ENCODE measurements at regions of chr22 and their contacts with region 1.

Region 1: DNA sequence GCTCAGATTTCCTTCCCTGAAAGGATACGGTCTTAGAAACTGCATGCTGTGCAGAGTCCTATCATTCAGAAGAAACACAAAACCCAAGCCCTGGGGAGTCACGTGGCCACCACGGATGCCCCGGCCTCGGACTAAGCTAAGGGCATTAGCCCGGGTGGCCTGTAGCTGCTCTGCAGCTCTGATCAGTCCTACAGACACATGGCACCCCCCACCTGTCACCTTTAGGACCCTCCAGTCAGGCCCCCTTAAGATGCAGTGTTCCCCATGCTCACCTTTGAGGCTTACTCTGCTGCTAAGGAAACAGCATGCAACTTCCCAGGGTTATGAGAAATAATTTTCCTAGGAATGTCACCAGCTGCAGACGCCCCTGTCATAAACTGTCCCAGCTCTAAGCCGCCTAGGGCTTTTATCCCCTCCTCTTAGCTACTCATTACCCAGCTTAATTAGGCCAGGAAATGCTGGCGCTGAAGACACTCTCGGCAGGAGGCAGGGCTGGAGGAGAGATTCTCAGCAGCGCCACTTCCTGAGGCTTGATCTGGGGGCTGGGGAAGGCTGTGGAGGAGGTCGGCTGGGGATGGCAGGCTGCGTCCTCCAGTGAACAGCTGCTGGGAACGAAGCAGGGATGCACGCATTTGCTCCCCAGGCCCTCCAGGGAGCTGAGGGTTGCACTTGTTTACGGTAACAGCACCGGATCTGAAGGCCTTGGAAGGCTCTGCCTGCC is 47.2 kb upstream of the ADA2 start:
- DNase-seq: no peak

Region 2: DNA sequence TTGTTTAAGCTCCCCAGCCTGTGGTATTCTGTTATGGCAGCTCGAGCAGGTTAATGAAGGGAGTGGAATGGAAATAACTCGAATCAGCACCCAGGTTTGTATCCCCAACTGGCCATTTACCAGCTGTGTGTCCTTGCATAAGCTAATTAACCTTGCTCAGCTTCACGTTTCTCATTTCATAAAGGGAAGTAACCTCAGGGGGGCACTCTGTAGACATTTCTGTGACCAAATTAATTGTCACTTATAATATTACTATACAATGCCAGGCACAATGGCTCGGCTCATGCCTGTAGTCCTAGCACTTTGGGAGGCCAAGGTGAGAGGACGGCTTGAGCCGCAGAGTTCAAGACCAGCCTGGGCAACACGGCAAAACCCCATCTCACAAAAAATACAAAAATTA is 61.0 kb before region 1 on chr22:
- intact Hi-C with region 1: loop called (anchors 5 kb)
- DNase-seq: no peak

Measured in cardiac septum (tissue), 1 donor.